Activated B cell treated with CpG ODN at 0.5 μM for 24 hours (primary cell): ENCODE measurements at regions of chr12 and their contacts with region 1.

Region 1: GRCh38 chr12:42104087-42104486 is 40.6 kb downstream of the GXYLT1 start:
- DNase-seq: no peak
- ATAC-seq: no peak
- H3K4me3 Mint-ChIP-seq: no peak overlapping the region
- H3K27ac Mint-ChIP-seq: no peak overlapping the region
- H3K4me1 Mint-ChIP-seq: peaks cover 6% of the 10 kb centered on the region
- H3K27me3 Mint-ChIP-seq: no peaks in the 10 kb centered on the region
- CTCF ChIP-seq: no peak

Region 2: GRCh38 chr12:40946612-40947194 is 1157.4 kb before region 1 on chr12:
- CTCF ChIA-PET with region 1: no interaction called
- POLR2A ChIA-PET with region 1: interaction called, 11 read pairs
- intact Hi-C with region 1: no loop called
- DNase-seq: no peak
- ATAC-seq: peak; percentile 25
- H3K4me3 Mint-ChIP-seq: no peak overlapping the region
- H3K27ac Mint-ChIP-seq: no peak overlapping the region
- H3K4me1 Mint-ChIP-seq: no peaks in the 10 kb centered on the region
- H3K27me3 Mint-ChIP-seq: peaks cover 7% of the 10 kb centered on the region
- CTCF ChIP-seq: no peak

Region 3: GRCh38 chr12:41277116-41277945 is 826.8 kb before region 1 on chr12:
- CTCF ChIA-PET with region 1: interaction called, 6 read pairs
- POLR2A ChIA-PET with region 1: no interaction called
- intact Hi-C with region 1: loop called (anchors 1 kb)
- DNase-seq: no peak
- ATAC-seq: peak; percentile 37
- H3K4me3 Mint-ChIP-seq: no peak overlapping the region
- H3K27ac Mint-ChIP-seq: no peak overlapping the region
- H3K4me1 Mint-ChIP-seq: peaks cover 3% of the 10 kb centered on the region
- H3K27me3 Mint-ChIP-seq: peaks cover 5% of the 10 kb centered on the region
- CTCF ChIP-seq: no peak

Region 4: DNA sequence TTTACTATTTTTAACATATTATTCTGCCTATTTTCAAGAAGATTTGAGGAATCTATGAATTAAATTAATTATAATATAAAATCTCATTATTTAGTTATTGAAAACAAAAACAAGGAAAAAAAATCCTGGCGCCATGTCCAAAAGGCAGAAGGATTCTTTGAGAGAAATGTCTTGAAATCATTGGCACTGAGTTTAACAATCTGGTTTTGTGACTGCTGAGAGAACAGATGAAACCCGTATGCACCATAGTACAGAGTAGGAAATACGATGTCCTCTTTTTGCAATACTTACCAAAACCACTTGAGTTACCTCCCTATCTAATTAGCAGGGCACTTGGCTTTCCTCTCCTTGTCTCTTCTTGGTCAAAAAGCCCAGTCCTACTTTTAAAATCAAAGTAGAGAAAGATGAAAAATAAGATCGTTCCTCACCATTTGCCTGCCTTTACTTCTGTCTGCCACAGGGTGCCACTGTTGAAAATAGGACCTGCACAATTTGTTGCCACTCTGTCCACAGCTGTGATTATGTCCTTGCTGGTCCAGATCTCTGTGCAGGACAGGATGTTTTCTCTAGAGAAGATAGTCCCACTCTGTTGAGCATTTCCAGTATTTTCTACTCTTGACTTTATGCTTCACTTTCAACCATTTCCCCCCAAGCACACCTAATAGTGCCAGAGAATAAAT is 736.2 kb before region 1 on chr12:
- CTCF ChIA-PET with region 1: no interaction called
- POLR2A ChIA-PET with region 1: no interaction called
- intact Hi-C with region 1: loop called (anchors 2 kb)
- DNase-seq: no peak
- ATAC-seq: no peak
- H3K4me3 Mint-ChIP-seq: no peak overlapping the region
- H3K27ac Mint-ChIP-seq: no peak overlapping the region
- H3K4me1 Mint-ChIP-seq: no peaks in the 10 kb centered on the region
- H3K27me3 Mint-ChIP-seq: no peaks in the 10 kb centered on the region
- CTCF ChIP-seq: no peak

Region 5: GRCh38 chr12:41950455-41950854 is 153.6 kb before region 1 on chr12:
- CTCF ChIA-PET with region 1: no interaction called
- POLR2A ChIA-PET with region 1: no interaction called
- intact Hi-C with region 1: no loop called
- DNase-seq: no peak
- ATAC-seq: no peak
- H3K4me3 Mint-ChIP-seq: no peak overlapping the region
- H3K27ac Mint-ChIP-seq: no peak overlapping the region
- H3K4me1 Mint-ChIP-seq: no peaks in the 10 kb centered on the region
- H3K27me3 Mint-ChIP-seq: peaks cover 5% of the 10 kb centered on the region
- CTCF ChIP-seq: no peak